GM18951 (cell line): ENCODE measurements at regions of chr6 and their contacts with region 1.

Region 1: DNA sequence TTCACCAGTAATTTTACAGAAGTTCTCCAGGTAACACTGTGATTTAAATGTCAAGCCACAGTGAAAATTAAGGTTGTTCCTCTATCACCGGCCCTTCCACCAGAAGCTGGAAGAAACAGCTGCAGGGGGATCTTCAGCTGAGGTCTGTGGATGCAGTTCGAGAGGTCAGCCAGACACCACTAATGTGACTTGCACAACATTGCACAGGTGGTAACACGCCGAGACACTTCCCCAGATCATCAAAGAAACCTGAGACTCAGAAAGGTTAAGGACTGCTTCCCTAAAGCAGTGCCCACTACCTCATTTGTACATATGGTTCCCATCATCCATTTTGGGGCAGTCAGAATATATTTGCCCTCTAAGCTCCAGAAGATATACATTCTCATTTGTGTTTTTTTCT is 8.1 kb upstream of the SERPINB9 start:
- POLR2A ChIP-seq: no peak

Region 2: GRCh38 chr6:2460216-2460745 is 450.9 kb before region 1 on chr6:
- in situ Hi-C with region 1: no loop called
- POLR2A ChIP-seq: no peak

Region 3: GRCh38 chr6:2714111-2714895 is 196.9 kb before region 1 on chr6:
- in situ Hi-C with region 1: no loop called
- POLR2A ChIP-seq: no peak

Region 4: DNA sequence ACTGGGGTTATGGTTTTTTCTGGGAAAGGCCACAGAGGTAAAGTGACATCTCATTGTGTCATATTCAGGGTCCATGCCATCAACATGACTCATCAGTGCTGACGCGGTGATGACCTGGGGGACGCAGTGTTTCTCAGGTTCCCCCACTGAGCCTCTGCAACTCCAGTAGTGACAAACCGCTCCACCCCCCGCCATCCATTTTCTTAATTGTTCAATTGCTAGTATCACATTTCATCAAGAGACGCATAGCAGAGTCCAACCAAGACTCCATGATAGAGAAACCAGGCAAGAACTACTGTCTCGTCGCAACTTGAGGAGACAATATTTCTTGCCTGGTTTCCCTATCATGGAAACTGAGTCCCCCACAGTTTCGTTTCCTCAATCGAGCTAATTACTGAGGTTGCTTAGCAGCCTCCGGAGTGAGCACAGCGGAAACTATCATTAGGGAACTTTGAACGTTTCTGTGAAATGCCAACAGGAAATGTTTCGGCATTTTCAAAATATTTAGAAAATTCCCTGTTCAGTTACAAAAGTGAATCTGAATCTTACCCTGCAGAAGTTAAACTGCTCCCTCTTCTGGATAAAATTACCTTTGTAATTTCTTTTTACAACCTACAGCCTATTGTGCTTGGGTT is 57.3 kb before region 1 on chr6:
- in situ Hi-C with region 1: loop called (anchors 10 kb)
- POLR2A ChIP-seq: no peak